ENCODE measurements at regions of chr15 and their contacts with region 1.

Region 1: DNA sequence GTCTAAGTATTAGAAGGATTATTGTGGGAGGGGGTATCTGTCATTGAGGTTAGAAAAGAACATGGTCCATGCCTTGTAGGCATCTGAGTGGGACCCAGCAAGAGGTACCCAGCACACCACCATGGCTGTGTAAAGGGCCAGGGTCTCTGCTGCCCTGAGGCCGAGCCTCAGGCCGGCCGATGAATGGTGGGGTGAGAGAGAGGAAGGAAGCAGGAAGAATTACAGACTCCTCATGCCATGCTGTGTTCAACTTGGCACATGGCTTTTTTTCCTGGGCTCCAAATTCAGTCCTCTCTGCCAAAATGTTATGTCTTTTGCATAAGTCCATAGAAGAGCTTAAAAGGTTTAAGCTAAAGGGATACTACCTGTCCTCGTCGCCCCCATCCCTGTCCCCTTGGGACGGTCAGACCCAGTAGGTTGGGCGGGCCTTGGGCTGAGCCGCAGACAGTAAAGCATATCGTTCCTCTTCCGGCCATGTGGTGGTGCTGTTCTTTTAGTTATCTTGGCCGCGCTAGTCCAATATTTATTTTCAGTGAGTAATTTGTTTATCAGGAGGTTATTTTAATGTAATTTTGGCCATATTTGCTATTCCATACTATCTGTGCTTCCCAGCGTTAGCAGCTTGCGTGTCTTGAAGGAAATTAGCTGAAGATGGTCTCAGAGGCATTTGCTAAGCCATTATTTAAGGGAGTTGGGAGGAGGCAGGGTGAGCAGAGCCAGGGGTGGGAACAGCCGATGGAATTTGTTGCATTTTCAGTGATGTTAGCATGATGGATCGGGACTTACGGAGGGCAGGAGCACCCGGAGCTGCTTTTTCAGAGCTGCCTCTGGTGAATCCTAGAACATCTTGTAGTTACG is 152.4 kb downstream of the AGBL1 start:
- DNase-seq: peak; percentile 30
- ATAC-seq: peak in 1 of 2 donors; percentile 61

Region 2: DNA sequence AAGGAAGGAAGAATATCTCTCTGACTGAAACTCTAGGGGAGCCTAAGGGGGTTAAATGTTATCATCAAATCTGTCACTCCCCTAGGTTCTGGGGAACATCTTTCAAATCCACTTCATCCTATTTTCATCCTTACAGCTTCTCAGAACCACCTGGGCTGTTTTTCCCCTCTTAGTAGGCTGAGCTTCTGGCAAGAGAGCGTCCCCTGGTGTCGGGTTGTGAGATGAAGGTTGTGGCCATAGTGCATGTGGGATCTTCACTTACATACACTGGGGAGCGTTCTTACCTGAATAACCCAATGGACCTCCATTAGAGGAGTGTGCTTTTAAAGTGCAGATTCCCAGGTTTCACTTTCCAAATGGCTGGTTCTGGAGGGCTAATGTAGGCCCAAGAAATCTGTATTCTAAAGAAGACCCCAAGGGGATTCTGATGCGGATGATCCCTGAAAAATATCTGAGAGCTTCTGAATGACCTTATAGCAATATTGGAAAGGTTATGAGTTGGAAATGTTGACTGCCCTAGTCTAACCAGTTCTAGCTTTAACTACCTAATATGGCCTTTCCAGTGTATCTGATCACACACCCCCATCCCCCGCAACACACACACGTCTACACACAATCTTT is 511.3 kb after region 1 on chr15:
- intact Hi-C with region 1: loop called in 1 of 2 experiments (anchors 10 kb)
- DNase-seq: peak; percentile 22
- ATAC-seq: no peak

Measured in left cardiac atrium (tissue), 4 donors.